Breast epithelium (tissue), 4 donors: ENCODE measurements at regions of chr1 and their contacts with region 1.

Region 1: DNA sequence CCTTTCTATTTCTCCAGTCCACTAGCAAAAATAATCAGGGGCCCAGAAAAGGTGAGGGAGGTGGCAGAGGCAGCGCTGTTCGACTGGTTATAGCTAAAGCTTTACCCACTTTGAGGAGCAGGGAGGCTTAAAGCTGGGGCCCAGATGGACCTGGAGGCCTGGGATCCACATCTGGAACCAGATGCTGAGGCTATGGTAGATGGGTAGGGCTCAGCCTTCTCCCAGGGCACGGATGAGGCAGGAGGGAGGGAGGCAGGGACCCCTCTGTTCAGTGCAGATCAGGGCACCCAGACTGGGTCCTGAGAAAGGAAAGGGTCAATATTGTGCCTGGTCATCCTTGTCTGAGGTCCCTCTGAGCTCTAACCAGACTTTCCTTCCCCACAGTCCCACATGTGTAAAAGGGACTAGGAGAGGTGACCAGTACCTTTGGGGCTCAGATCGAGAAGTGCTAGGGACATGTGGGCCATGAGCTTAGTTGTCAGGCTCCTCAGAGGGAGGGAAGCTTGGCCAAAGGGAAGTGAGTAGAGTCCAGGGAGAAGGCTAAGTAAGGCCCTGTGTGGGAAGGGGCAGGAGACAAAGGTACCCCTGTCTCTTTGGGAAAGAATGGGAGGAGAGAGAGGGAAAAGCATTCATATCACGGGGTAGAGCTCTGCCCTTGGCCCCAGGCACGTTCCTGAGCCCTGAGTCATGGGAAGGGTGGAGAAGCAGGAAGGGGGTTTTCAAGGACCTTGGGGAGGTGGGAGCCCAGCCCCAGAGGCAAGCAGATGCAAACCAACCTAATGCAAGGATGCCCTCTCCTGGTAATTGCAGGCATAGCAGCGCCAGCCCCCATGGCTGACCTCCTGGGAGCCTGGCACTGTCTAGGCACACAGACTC is 15.4 kb downstream of the LMNA start:
- DNase-seq: peak; percentile 92 to 96
- H3K4me3 ChIP-seq: peak overlapping the region in 2 of 3 donors; percentile 14 to 49
- H3K27ac ChIP-seq: peak overlapping the region; percentile 98
- H3K4me1 ChIP-seq: peaks cover 37 to 48% of the 10 kb centered on the region in 2 donors
- H3K27me3 ChIP-seq: no peaks in the 10 kb centered on the region
- CTCF ChIP-seq: peak; percentile 95 to 99 (median 99)
- POLR2A ChIP-seq: no peak

Region 2: GRCh38 chr1:156096640-156097391 is 33.1 kb before region 1 on chr1:
- intact Hi-C with region 1: loop called (anchors 2 kb)
- DNase-seq: peak; percentile 89 to 94
- H3K4me3 ChIP-seq: peak overlapping the region in 1 of 3 donors; percentile 34
- H3K27ac ChIP-seq: peak overlapping the region; percentile 91 to 92
- H3K4me1 ChIP-seq: peaks cover 4 to 13% of the 10 kb centered on the region in 2 donors
- H3K27me3 ChIP-seq: no peaks in the 10 kb centered on the region
- CTCF ChIP-seq: peak; percentile 93 to 98 (median 98)
- POLR2A ChIP-seq: no peak